Activated CD4-positive, alpha-beta T cell treated with anti-CD3 and anti-CD28 coated beads for 36 hours (primary cell): ENCODE measurements at regions of chr2 and their contacts with region 1.

Region 1: GRCh38 chr2:58240670-58241545 is at the start of gene FANCL:
- DNase-seq: peak; percentile 85
- ATAC-seq: peak; percentile 84
- H3K4me3 Mint-ChIP-seq: peak within 1 kb of the TSS; percentile 91
- H3K27ac Mint-ChIP-seq: peak within 1 kb of the TSS; percentile 89
- H3K4me1 Mint-ChIP-seq: peaks cover 31% of the 10 kb centered on the region
- H3K27me3 Mint-ChIP-seq: peaks cover 7% of the 10 kb centered on the region
- total RNA-seq, gene FANCL: 16.6 to 19.7 TPM

Region 2: DNA sequence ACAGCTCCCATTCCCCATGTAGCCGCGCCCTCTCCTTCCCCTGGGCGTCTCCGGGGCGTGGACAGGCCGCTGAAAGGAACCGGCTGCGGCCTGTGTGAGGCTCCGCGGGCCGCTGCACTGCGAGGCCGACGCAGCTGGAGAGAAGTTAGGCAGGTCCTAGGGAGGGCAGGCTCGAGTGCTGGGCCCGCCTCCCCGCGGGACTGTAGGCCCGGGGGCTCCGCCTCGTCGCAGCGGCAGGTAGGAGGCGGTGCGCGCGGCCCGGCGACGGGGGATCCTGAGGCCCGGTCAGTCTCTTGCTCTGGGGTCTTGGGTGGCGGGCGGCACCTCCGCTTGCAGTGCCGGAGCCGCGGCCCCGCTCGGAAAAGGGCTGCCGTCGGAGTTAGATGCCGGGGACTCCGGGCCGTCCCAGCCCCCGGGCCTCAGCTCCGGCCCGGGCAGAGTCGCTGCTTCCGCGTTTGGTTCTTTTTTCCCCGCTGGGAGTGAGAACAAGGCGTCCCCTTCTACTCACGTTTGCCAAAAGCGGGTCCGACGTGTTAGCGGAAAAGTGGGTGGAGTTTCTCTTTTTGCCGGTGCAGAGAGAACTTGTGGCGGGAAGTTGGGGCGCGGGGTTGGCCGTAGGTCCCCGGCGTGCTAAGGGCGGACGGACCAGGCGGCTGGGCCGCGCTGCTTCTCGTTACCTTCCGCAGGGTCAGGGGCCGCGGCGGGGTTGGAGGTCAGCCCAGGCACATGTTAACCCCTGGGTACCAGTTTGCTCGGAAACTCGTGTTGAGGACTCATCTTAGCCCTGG is 194.1 kb before region 1 on chr2 and contains the start of gene VRK2:
- CTCF ChIA-PET with region 1: no interaction called
- POLR2A ChIA-PET with region 1: no interaction called
- intact Hi-C with region 1: loop called (anchors 1 to 5 kb)
- DNase-seq: peak; percentile 91
- ATAC-seq: peak; percentile 89
- H3K4me3 Mint-ChIP-seq: peak within 1 kb of the TSS; percentile 87
- H3K27ac Mint-ChIP-seq: peak within 1 kb of the TSS; percentile 94
- H3K4me1 Mint-ChIP-seq: peaks cover 44% of the 10 kb centered on the region
- H3K27me3 Mint-ChIP-seq: no peaks in the 10 kb centered on the region
- total RNA-seq, gene VRK2: 22.1 to 28.4 TPM

Region 3: DNA sequence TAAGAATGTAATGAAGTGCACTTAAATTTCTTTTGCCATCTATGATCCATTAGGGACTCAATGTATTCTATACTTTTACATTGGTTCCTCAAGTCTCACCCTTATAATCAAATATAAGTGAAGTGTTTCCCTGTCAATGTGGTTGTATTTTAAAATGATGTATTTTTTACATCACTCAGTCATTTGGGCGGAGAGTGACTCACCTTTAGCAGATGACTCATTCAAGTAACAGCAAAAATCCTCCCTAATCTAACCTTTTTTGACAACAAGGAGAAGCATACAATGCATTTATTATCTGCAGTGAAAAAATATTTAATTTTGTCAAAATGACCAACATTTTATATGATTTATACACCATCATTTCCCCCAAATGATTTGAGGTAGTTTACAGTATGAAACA is 94.2 kb before region 1 on chr2:
- CTCF ChIA-PET with region 1: no interaction called
- POLR2A ChIA-PET with region 1: no interaction called
- intact Hi-C with region 1: loop called in 1 of 2 experiments (anchors 5 kb)
- DNase-seq: peak; percentile 33
- ATAC-seq: peak; percentile 80
- H3K4me3 Mint-ChIP-seq: no peak overlapping the region
- H3K27ac Mint-ChIP-seq: no peak overlapping the region
- H3K4me1 Mint-ChIP-seq: peaks cover 12% of the 10 kb centered on the region
- H3K27me3 Mint-ChIP-seq: no peaks in the 10 kb centered on the region

Region 4: DNA sequence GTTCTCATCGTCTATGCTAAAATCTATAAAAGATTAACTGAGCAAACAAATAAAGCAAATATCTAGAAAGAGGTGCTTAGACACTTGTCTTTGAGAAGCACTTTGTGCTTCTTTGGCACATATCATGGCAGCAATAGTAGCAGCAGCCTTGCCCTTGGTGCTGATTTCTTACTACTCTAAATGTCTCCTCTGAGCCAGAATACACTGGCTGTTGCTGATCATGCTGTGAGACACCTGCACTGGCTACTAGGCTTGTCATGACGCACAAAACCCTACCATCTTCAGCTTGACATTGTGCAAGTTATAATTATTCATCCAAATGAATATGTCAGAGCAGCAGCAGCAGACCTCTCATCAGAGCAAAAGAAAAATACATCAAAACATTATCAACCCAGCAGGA is 46.5 kb before region 1 on chr2:
- CTCF ChIA-PET with region 1: no interaction called
- POLR2A ChIA-PET with region 1: interaction called, 11 read pairs
- intact Hi-C with region 1: no loop called
- DNase-seq: no peak
- ATAC-seq: no peak
- H3K4me3 Mint-ChIP-seq: no peak overlapping the region
- H3K27ac Mint-ChIP-seq: no peak overlapping the region
- H3K4me1 Mint-ChIP-seq: no peaks in the 10 kb centered on the region
- H3K27me3 Mint-ChIP-seq: no peaks in the 10 kb centered on the region

Region 5: GRCh38 chr2:58261215-58261614 is 20.3 kb after region 1 on chr2:
- CTCF ChIA-PET with region 1: interaction called, 5 read pairs
- POLR2A ChIA-PET with region 1: no interaction called
- intact Hi-C with region 1: loop called (anchors 1 to 2 kb)
- DNase-seq: no peak
- ATAC-seq: no peak
- H3K4me3 Mint-ChIP-seq: no peak overlapping the region
- H3K27ac Mint-ChIP-seq: no peak overlapping the region
- H3K4me1 Mint-ChIP-seq: peaks cover 8% of the 10 kb centered on the region
- H3K27me3 Mint-ChIP-seq: peaks cover 15% of the 10 kb centered on the region